Calu3 (cell line): ENCODE measurements at regions of chr1 and their contacts with region 1.

Region 1: GRCh38 chr1:59678493-59679228 is 136.1 kb upstream of the HOOK1 start:
- DNase-seq: peak; percentile 64
- H3K4me3 Mint-ChIP-seq: no peak overlapping the region
- H3K27ac Mint-ChIP-seq: peak overlapping the region; percentile 48
- H3K4me1 Mint-ChIP-seq: peaks cover 36% of the 10 kb centered on the region
- H3K27me3 Mint-ChIP-seq: no peaks in the 10 kb centered on the region
- CTCF ChIP-seq: no peak

Region 2: GRCh38 chr1:59422921-59423575 is 255.6 kb before region 1 on chr1:
- CTCF ChIA-PET with region 1: interaction called, 7 read pairs
- intact Hi-C with region 1: loop called (anchors 10 kb)
- DNase-seq: peak; percentile 23
- H3K4me3 Mint-ChIP-seq: no peak overlapping the region
- H3K27ac Mint-ChIP-seq: no peak overlapping the region
- H3K4me1 Mint-ChIP-seq: peaks cover 47% of the 10 kb centered on the region
- H3K27me3 Mint-ChIP-seq: no peaks in the 10 kb centered on the region
- CTCF ChIP-seq: no peak

Region 3: GRCh38 chr1:59532102-59532501 is 146.6 kb before region 1 on chr1:
- CTCF ChIA-PET with region 1: no interaction called
- intact Hi-C with region 1: no loop called
- DNase-seq: no peak
- H3K4me3 Mint-ChIP-seq: no peak overlapping the region
- H3K27ac Mint-ChIP-seq: no peak overlapping the region
- H3K4me1 Mint-ChIP-seq: no peaks in the 10 kb centered on the region
- H3K27me3 Mint-ChIP-seq: no peaks in the 10 kb centered on the region
- CTCF ChIP-seq: no peak

Region 4: GRCh38 chr1:59543211-59543668 is 135.4 kb before region 1 on chr1:
- CTCF ChIA-PET with region 1: no interaction called
- intact Hi-C with region 1: loop called (anchors 5 kb)
- DNase-seq: peak; percentile 11
- H3K4me3 Mint-ChIP-seq: peak overlapping the region; percentile 33
- H3K27ac Mint-ChIP-seq: peak overlapping the region; percentile 75
- H3K4me1 Mint-ChIP-seq: peaks cover 55% of the 10 kb centered on the region
- H3K27me3 Mint-ChIP-seq: no peaks in the 10 kb centered on the region
- CTCF ChIP-seq: no peak

Region 5: DNA sequence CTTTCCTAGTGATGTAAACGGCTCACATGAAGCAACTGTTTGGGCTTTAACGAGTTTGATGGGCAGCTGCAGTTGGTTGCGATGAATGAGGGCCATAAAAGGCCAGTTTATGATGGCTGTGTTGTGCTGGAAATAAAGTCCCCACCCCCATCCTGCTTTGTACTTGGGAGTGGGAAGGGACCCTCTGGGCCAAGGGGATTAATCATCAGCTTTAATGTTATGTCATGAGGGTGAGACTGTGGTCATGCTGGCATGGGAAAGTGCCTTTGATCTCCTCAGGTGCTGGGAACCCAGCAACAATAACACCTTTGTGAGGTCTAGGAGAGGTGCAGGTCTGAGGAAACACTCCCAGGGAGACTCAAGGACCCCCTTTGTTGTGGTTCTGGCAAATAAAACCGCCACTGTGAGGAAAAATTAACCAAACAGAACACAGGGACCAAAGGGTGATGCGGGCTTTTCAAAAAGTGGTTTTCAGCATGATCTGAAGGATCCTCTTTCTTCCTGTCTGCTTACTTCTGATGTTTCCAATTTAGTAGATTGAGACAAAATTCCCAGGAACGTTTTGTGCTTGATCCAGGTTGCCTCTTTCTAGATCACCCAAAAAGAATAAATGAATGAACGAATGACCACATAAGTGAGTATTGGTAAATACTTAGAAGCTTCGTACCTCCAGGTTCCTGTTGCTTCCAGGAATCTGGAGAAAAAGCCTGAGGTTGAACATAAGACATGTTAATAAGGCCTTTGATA is 121.7 kb before region 1 on chr1:
- CTCF ChIA-PET with region 1: interaction called, 3 read pairs
- intact Hi-C with region 1: loop called (anchors 5 kb)
- DNase-seq: peak; percentile 81
- H3K4me3 Mint-ChIP-seq: peak overlapping the region; percentile 24
- H3K27ac Mint-ChIP-seq: peak overlapping the region; percentile 82
- H3K4me1 Mint-ChIP-seq: peaks cover 61% of the 10 kb centered on the region
- H3K27me3 Mint-ChIP-seq: no peaks in the 10 kb centered on the region
- CTCF ChIP-seq: no peak